Caco-2 (cell line): ENCODE measurements at regions of chr3 and their contacts with region 1.

Region 1: GRCh38 chr3:139329345-139329850 is 14.4 kb upstream of the MRPS22 start:
- DNase-seq: peak; percentile 88 to 95
- H3K4me3 ChIP-seq: peak overlapping the region; percentile 19
- H3K4me3 Mint-ChIP-seq: peak overlapping the region; percentile 46
- H3K27ac Mint-ChIP-seq: no peak overlapping the region
- H3K4me1 ChIP-seq: no peaks in the 10 kb centered on the region; the same call in 1 of the 2 replicates
- H3K4me1 Mint-ChIP-seq: no peaks in the 10 kb centered on the region
- H3K27me3 ChIP-seq: no peaks in the 10 kb centered on the region; the same call in 1 of the 2 replicates
- H3K27me3 Mint-ChIP-seq: peaks cover 12% of the 10 kb centered on the region
- CTCF ChIP-seq: peak; percentile 97 to 99

Region 2: GRCh38 chr3:139202226-139202958 is 127.0 kb before region 1 on chr3:
- CTCF ChIA-PET with region 1: interaction called, 5 read pairs
- POLR2A ChIA-PET with region 1: no interaction called
- intact Hi-C with region 1: loop called (anchors 5 kb)
- DNase-seq: peak; percentile 68 to 75
- H3K4me3 ChIP-seq: no peak overlapping the region
- H3K4me3 Mint-ChIP-seq: no peak overlapping the region
- H3K27ac Mint-ChIP-seq: no peak overlapping the region
- H3K4me1 ChIP-seq: no peaks in the 10 kb centered on the region
- H3K4me1 Mint-ChIP-seq: no peaks in the 10 kb centered on the region
- H3K27me3 ChIP-seq: no peaks in the 10 kb centered on the region
- H3K27me3 Mint-ChIP-seq: no peaks in the 10 kb centered on the region
- CTCF ChIP-seq: peak; percentile 22 to 65

Region 3: DNA sequence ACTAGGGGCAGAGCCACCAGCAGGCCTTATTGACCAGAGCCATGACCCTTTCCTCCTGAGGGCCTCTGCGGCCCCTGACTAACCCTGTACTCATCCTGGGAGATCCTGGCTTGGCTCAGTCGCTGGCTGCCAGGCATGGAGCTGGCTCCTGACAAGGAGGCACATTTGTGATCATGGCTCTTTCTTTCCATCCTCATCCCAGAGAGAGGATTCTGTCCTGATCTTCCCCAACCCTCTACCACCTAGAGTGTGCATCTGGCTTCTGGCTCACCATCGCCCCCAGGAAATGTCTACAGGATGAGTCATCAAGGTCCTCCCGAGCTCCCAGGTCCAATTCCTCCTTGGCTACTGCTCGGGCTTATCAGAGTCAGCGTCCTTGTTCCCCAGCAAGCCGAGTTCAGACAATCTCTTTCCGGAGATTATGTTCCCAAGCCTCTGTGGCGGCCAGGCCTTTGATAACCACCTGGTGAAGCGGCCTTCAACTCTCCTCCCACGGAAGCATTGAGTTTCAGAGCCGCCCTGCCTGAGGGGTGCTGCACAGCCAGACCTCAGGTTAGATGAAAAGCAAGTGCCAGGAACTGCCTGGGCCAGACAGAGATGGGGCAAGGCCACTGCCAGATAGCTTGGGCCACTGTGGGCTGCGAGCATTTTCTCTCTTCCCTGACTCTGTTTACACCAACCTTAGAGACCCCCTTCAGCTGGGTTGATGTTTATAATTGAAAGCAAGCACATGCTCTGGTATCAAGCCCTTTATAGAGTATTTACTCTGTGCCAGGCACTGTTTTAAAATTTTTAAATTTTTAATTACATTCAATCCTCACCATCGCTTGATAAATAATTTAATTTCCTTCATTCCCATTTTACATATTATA is 29.9 kb before region 1 on chr3:
- CTCF ChIA-PET with region 1: interaction called, 3 read pairs
- POLR2A ChIA-PET with region 1: no interaction called
- intact Hi-C with region 1: loop called (anchors 2 kb)
- DNase-seq: peak; percentile 39 to 81
- H3K4me3 ChIP-seq: no peak overlapping the region
- H3K4me3 Mint-ChIP-seq: no peak overlapping the region
- H3K27ac Mint-ChIP-seq: no peak overlapping the region
- H3K4me1 ChIP-seq: peaks cover 19% of the 10 kb centered on the region; the same call in 1 of the 2 replicates
- H3K4me1 Mint-ChIP-seq: peaks cover 7% of the 10 kb centered on the region
- H3K27me3 ChIP-seq: no peaks in the 10 kb centered on the region
- H3K27me3 Mint-ChIP-seq: no peaks in the 10 kb centered on the region
- CTCF ChIP-seq: no peak

Region 4: DNA sequence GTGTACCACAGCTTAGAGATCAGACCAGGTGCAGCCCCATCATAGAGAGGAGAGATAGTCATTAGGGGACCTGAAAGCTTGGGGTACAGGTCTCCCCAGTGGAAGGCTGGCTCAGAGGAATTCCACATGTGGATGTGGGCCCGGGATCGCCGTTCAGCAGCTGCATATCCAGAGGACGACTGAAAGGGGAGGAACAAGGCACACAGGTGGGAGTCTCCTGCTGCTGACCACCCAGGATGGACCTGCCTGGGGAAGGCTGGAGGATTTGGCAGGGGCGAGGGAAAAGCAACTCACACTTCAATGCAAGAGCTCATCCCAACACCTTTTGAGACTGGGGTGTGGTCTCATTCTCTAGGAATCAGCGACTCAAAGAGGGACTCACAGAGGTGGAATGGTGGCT is 10.6 kb before region 1 on chr3:
- CTCF ChIA-PET with region 1: no interaction called
- POLR2A ChIA-PET with region 1: no interaction called
- intact Hi-C with region 1: no loop called
- DNase-seq: no peak
- H3K4me3 ChIP-seq: no peak overlapping the region
- H3K4me3 Mint-ChIP-seq: no peak overlapping the region
- H3K27ac Mint-ChIP-seq: no peak overlapping the region
- H3K4me1 ChIP-seq: peaks cover 22% of the 10 kb centered on the region
- H3K4me1 Mint-ChIP-seq: peaks cover 18% of the 10 kb centered on the region
- H3K27me3 ChIP-seq: no peaks in the 10 kb centered on the region
- H3K27me3 Mint-ChIP-seq: no peaks in the 10 kb centered on the region
- CTCF ChIP-seq: no peak